Gastrocnemius medialis (tissue), 4 donors: ENCODE measurements at regions of chr19 and their contacts with region 1.

Region 1: DNA sequence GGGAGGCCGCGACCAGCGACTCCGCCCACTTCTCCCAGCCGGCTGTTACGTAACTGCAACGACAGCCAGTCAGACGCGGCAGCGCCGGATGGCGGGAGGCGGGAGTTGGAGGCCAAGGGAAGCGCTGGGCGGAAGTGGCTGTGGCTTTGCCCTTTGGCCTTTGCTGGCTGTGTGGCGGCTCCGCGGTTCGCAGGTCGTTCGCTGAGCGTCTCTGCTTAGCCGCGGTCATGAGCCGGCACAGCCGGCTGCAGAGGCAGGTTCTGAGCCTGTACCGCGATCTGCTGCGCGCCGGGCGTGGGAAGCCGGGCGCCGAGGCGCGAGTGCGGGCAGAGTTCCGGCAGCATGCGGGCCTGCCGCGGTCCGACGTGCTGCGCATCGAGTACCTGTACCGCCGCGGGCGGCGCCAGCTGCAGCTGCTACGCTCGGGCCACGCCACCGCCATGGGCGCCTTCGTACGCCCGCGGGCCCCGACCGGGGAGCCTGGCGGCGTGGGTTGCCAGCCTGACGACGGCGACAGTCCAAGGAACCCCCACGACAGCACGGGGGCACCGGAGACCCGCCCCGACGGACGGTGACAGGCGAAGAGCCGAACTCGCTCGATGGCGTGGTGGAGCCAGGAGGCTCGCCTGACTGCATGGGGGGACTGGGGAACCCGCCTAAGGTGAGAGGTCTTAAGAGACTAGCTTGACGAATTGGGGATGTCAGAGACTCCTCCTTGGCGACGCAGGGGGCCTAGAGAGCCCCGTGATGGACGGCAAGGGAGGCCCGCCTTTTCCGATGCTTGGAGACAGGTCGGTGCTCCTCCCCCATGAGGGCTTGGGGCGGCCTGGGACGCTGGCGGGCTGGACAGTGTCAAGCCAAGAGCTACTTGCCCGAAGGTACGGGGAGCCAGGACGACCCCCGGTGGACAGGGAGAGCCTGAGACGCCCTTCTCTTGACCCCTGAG is at the start of gene SDHAF1:
- DNase-seq: peak; percentile 96
- ATAC-seq: peak; percentile 96 to 97
- H3K4me3 ChIP-seq: peak within 1 kb of the TSS; percentile 53 to 92 (median 78)
- H3K27ac ChIP-seq: peak within 1 kb of the TSS; percentile 78 to 91 (median 84)
- H3K4me1 ChIP-seq: peaks cover 24 to 31% of the 10 kb centered on the region in 2 donors
- H3K27me3 ChIP-seq: no peaks in the 10 kb centered on the region
- CTCF ChIP-seq: no peak
- POLR2A ChIP-seq: peak in 1 of 2 donors; percentile 73
- total RNA-seq, gene SDHAF1: 42.8 to 54.9 (median 49.9) TPM

Region 2: GRCh38 chr19:35775298-35776110 is 219.8 kb before region 1 on chr19 and contains the start of gene ARHGAP33:
- in situ Hi-C with region 1: no loop called
- intact Hi-C with region 1: loop called (anchors 10 kb)
- DNase-seq: peak; percentile 95 to 98
- ATAC-seq: peak; percentile 98
- H3K4me3 ChIP-seq: peak within 1 kb of the TSS; percentile 60 to 81 (median 73)
- H3K27ac ChIP-seq: peak within 1 kb of the TSS; percentile 35 to 69 (median 45)
- H3K4me1 ChIP-seq: peaks cover 4 to 5% of the 10 kb centered on the region in 2 donors
- H3K27me3 ChIP-seq: no peaks in the 10 kb centered on the region
- CTCF ChIP-seq: no peak
- POLR2A ChIP-seq: no peak
- total RNA-seq, gene ARHGAP33: 0.22 to 4.7 (median 2.2) TPM

Region 3: GRCh38 chr19:36014029-36014924 is 19.0 kb after region 1 on chr19 and contains the start of gene ALKBH6:
- in situ Hi-C with region 1: no loop called
- intact Hi-C with region 1: loop called (anchors 1 kb)
- DNase-seq: peak; percentile 99 to 100
- ATAC-seq: peak; percentile 98 to 99
- H3K4me3 ChIP-seq: peak within 1 kb of the TSS; percentile 71 to 95 (median 88)
- H3K27ac ChIP-seq: peak within 1 kb of the TSS; percentile 83 to 89 (median 86)
- H3K4me1 ChIP-seq: peaks cover 5 to 16% of the 10 kb centered on the region in 2 donors
- H3K27me3 ChIP-seq: peaks cover 0 to 5% (median 0%) of the 10 kb centered on the region in 3 donors
- CTCF ChIP-seq: peak in 1 of 5 experiments; percentile 16
- POLR2A ChIP-seq: peak in 1 of 2 donors; percentile 16
- total RNA-seq, gene ALKBH6: 10.6 to 50.1 (median 19.0) TPM

Region 4: GRCh38 chr19:36054119-36054732 is 58.9 kb after region 1 on chr19 and contains the start of gene THAP8:
- in situ Hi-C with region 1: loop called in 1 of 4 experiments (anchors 5 kb)
- intact Hi-C with region 1: loop called (anchors 1 kb)
- DNase-seq: peak; percentile 100
- ATAC-seq: peak; percentile 92 to 95
- H3K4me3 ChIP-seq: peak within 1 kb of the TSS; percentile 67 to 93 (median 83)
- H3K27ac ChIP-seq: peak within 1 kb of the TSS; percentile 87 to 99 (median 96)
- H3K4me1 ChIP-seq: peaks cover 12 to 13% of the 10 kb centered on the region in 2 donors
- H3K27me3 ChIP-seq: no peaks in the 10 kb centered on the region
- CTCF ChIP-seq: peak; percentile 50 to 58 (median 54)
- POLR2A ChIP-seq: peak; percentile 65 to 72
- total RNA-seq, gene THAP8: 6.1 to 10.5 (median 6.1) TPM

Region 5: GRCh38 chr19:36103626-36104552 is 108.6 kb after region 1 on chr19:
- in situ Hi-C with region 1: no loop called
- intact Hi-C with region 1: no loop called
- DNase-seq: no peak
- ATAC-seq: no peak
- H3K4me3 ChIP-seq: no peak overlapping the region
- H3K27ac ChIP-seq: peak overlapping the region in 2 of 4 donors; percentile 38 to 42
- H3K4me1 ChIP-seq: peaks cover 27 to 41% of the 10 kb centered on the region in 2 donors
- H3K27me3 ChIP-seq: no peaks in the 10 kb centered on the region
- CTCF ChIP-seq: no peak
- POLR2A ChIP-seq: no peak

Region 6: GRCh38 chr19:36114763-36115452 is 119.6 kb after region 1 on chr19 and contains the start of gene POLR2I:
- in situ Hi-C with region 1: no loop called
- intact Hi-C with region 1: no loop called
- DNase-seq: peak; percentile 100
- ATAC-seq: peak; percentile 98
- H3K4me3 ChIP-seq: peak within 1 kb of the TSS; percentile 69 to 94 (median 82)
- H3K27ac ChIP-seq: peak within 1 kb of the TSS; percentile 86 to 95 (median 92)
- H3K4me1 ChIP-seq: peaks cover 17 to 18% of the 10 kb centered on the region in 2 donors
- H3K27me3 ChIP-seq: no peaks in the 10 kb centered on the region
- CTCF ChIP-seq: no peak
- POLR2A ChIP-seq: peak; percentile 61 to 77
- total RNA-seq, gene POLR2I: 61.0 to 88.7 (median 79.4) TPM